ENCODE measurements at regions of chr9 and their contacts with region 1.

Region 1: DNA sequence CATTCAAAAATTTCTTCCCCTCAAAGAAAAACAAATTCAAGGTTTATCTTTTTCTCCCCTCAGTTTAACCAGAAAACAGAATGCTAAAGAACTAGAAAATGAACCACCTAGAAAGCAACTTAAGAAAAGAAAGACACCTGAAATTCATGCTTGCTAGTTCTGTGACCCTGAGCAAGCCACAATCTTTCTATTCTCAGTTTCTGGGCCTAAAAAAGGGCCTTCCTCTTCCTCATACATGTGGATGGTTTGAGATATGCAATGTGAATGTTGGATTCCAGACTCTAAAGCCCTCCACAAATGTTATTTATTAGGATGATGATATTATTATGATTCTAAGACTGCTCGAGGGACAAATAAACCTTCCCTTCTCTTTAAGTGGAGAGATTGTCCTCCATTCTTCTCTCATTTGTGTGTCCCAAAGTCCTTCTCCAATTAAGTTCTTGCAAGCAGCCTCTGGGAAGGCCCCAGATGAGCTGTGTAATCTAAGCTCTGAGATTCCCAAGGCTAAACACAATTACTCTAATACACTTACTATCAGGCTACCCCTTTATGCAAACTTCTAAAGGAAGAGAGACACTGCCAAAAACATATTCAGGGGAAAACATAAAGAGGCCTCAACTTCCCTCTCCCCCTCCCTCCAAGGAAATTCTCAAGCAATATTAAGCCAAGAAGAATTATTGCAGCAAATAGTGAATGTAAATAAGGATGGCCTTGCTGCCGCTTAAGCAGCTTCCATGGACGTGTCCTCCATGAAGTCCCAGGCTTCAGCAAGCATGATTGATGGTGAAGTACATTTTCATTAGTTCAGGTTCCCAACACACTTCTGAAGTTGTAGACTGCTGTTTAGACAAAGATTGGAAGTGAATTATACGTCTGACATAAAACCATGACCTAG is 80.2 kb downstream of the PRKACG start:
- DNase-seq: no peak
- ATAC-seq: no peak
- H3K4me3 ChIP-seq: no peak overlapping the region
- H3K27ac ChIP-seq: no peak overlapping the region
- H3K4me1 ChIP-seq: no peaks in the 10 kb centered on the region
- H3K27me3 ChIP-seq: peaks cover 23% of the 10 kb centered on the region
- CTCF ChIP-seq: no peak
- POLR2A ChIP-seq: no peak
- RAD21 ChIP-seq: no peak

Region 2: GRCh38 chr9:68595868-68596267 is 337.8 kb before region 1 on chr9:
- CTCF ChIA-PET with region 1: no interaction called
- POLR2A ChIA-PET with region 1: no interaction called
- RAD21 ChIA-PET with region 1: no interaction called
- intact Hi-C with region 1: no loop called
- DNase-seq: no peak
- ATAC-seq: no peak
- H3K4me3 ChIP-seq: no peak overlapping the region
- H3K27ac ChIP-seq: no peak overlapping the region
- H3K4me1 ChIP-seq: no peaks in the 10 kb centered on the region
- H3K27me3 ChIP-seq: 0 out of 2 replicates have a peak, but pooled peaks cover 8% of the 10 kb centered on the region
- CTCF ChIP-seq: no peak
- POLR2A ChIP-seq: no peak
- RAD21 ChIP-seq: no peak

Region 3: GRCh38 chr9:68619636-68620035 is 314.0 kb before region 1 on chr9:
- CTCF ChIA-PET with region 1: no interaction called
- POLR2A ChIA-PET with region 1: no interaction called
- RAD21 ChIA-PET with region 1: no interaction called
- intact Hi-C with region 1: no loop called
- DNase-seq: no peak
- ATAC-seq: no peak
- H3K4me3 ChIP-seq: no peak overlapping the region
- H3K27ac ChIP-seq: no peak overlapping the region
- H3K4me1 ChIP-seq: no peaks in the 10 kb centered on the region
- H3K27me3 ChIP-seq: peaks cover 3% of the 10 kb centered on the region
- CTCF ChIP-seq: no peak
- POLR2A ChIP-seq: no peak
- RAD21 ChIP-seq: no peak

Region 4: DNA sequence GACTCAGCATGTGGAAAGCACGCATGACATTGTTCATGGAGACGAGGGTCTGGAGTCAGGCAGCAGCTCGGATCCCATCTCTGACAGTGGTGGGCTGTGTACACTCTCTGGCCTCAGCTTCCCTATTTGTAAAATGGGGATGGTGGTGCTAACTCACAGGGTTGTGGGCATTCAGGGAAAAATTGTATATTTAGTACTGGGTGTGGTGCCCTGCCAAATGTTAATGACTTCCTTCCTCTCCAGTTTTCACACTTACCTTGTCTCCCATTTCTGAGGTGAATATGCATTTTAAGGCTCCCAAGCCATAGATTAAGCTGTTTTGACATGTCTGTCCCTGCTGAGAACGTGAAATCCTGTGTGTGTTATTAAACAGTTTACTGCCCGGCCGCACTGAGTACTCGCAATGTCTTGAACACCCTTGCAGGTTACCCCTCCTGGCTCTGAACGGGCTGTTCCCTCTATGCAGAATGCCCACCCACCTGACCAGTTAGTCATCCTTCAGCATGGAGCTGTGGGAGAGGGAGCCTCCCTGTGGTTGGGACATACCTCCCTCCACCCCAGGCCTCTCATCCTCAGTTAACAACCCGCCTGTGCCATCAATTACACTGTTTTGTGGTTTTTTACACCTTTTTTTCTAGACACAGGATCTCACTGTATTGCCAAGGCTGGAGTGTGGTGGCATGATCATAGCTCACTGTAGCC is 266.2 kb after region 1 on chr9:
- CTCF ChIA-PET with region 1: no interaction called
- POLR2A ChIA-PET with region 1: no interaction called
- RAD21 ChIA-PET with region 1: no interaction called
- intact Hi-C with region 1: no loop called
- DNase-seq: no peak
- ATAC-seq: peak; percentile 77
- H3K4me3 ChIP-seq: no peak overlapping the region
- H3K27ac ChIP-seq: no peak overlapping the region
- H3K4me1 ChIP-seq: peaks cover 6 to 11% of the 10 kb centered on the region in 2 experiments; a peak in 3 of 4 replicates
- H3K27me3 ChIP-seq: no peaks in the 10 kb centered on the region
- CTCF ChIP-seq: 0 out of 6 replicates have a peak, but pooled peaks of 1 of the 3 experiments have one; percentile 11
- POLR2A ChIP-seq: no peak
- RAD21 ChIP-seq: peak; percentile 37; the same call in 1 of the 2 replicates

Region 5: DNA sequence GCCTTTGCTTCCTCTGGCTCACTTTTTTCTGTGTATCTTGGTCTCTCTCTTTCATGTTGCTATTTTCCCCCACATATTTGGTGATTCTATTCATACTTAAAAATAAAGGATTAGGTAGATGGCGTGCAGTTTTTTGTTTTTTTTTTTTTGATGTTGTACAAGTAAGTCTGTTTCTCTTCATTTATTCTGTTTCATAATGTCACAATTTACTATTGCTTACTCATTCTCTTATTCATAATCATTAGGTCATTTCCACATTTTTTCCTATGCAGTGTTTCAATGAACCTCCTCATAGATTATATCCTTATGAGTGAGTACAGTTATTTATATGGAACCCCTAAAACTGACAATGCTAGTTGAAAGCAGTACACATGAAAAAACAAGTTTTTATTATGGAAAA is 602.2 kb after region 1 on chr9:
- CTCF ChIA-PET with region 1: no interaction called
- POLR2A ChIA-PET with region 1: no interaction called
- RAD21 ChIA-PET with region 1: no interaction called
- intact Hi-C with region 1: loop called (anchors 5 kb)
- DNase-seq: no peak
- ATAC-seq: no peak
- H3K4me3 ChIP-seq: no peak overlapping the region
- H3K27ac ChIP-seq: no peak overlapping the region
- H3K4me1 ChIP-seq: no peaks in the 10 kb centered on the region
- H3K27me3 ChIP-seq: peaks cover 60% of the 10 kb centered on the region
- CTCF ChIP-seq: no peak
- POLR2A ChIP-seq: no peak
- RAD21 ChIP-seq: no peak

Measured in HCT116 (cell line).